Left colon (tissue), 2 donors: ENCODE measurements at regions of chr9 and their contacts with region 1.

Region 1: GRCh38 chr9:91361291-91362050 is at the start of gene AUH:
- DNase-seq: peak; percentile 81 to 91
- ATAC-seq: peak; percentile 97
- total RNA-seq, gene AUH: 30.4 to 36.0 TPM

Region 2: GRCh38 chr9:90914868-90915483 is 446.5 kb before region 1 on chr9:
- intact Hi-C with region 1: no loop called
- DNase-seq: peak; percentile 65 to 73
- ATAC-seq: peak; percentile 98

Region 3: GRCh38 chr9:91411096-91411771 is 49.8 kb after region 1 on chr9:
- intact Hi-C with region 1: loop called in 1 of 2 experiments (anchors 5 kb)
- DNase-seq: no peak
- ATAC-seq: no peak

Region 4: GRCh38 chr9:91643481-91644077 is 282.1 kb after region 1 on chr9:
- intact Hi-C with region 1: no loop called
- DNase-seq: no peak
- ATAC-seq: no peak

Region 5: GRCh38 chr9:92026206-92027002 is 664.9 kb after region 1 on chr9:
- intact Hi-C with region 1: no loop called
- DNase-seq: no peak
- ATAC-seq: no peak